PC-9 (cell line): ENCODE measurements at regions of chr3 and their contacts with region 1.

Region 1: DNA sequence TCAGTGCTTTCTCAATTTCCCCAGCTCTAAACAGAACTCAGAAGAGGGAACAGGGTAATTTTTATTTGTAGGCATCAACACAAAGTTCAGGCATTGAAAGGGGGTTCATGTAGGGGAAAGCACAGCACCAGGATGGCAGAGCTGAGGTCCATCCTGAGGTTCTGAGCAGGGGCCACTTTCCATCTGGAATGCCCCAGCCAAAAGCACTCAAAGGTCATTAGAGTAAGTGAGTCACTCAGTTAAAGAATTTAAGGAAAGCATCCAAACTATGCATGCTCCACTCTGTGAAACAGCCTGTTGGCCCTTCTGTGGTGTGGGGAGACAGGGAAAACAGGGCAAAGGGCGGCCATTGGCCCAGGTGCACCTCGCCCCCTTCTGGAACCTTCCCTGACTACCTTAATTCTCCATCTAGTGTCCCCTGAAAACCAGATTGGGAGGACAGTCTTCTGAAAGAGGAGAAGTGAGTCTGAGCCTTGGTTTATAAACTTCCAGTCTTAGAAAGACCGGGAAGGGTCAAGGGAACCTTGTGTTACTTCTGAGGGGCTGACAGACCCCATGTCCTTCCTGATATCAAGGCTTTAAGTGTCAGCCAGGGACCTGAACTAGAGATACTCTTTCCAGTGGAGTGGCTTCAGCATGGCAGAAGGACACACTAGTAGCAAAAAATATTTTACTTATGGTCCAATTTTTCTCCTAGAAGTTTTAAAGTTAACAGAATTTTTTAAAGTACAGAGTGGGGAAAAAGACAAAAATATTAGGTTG is 133.3 kb downstream of the MYLK start:
- DNase-seq: peak; percentile 66 to 87
- H3K4me3 ChIP-seq: no peak overlapping the region
- H3K27ac ChIP-seq: peak overlapping the region; percentile 81
- H3K4me1 ChIP-seq: peaks cover 30% of the 10 kb centered on the region
- H3K27me3 ChIP-seq: no peaks in the 10 kb centered on the region
- CTCF ChIP-seq: no peak; the same call in 1 of the 2 replicates

Region 2: GRCh38 chr3:123818921-123819429 is 68.1 kb after region 1 on chr3:
- CTCF ChIA-PET with region 1: no interaction called
- POLR2A ChIA-PET with region 1: no interaction called
- intact Hi-C with region 1: loop called (anchors 2 kb)
- DNase-seq: peak; percentile 47 to 88
- H3K4me3 ChIP-seq: no peak overlapping the region
- H3K27ac ChIP-seq: no peak overlapping the region
- H3K4me1 ChIP-seq: peaks cover 23% of the 10 kb centered on the region
- H3K27me3 ChIP-seq: no peaks in the 10 kb centered on the region
- CTCF ChIP-seq: no peak

Region 3: GRCh38 chr3:124260206-124260915 is 509.5 kb after region 1 on chr3:
- CTCF ChIA-PET with region 1: no interaction called
- POLR2A ChIA-PET with region 1: no interaction called
- intact Hi-C with region 1: loop called (anchors 5 kb)
- DNase-seq: peak in 1 of 2 experiments; percentile 37
- H3K4me3 ChIP-seq: no peak overlapping the region
- H3K27ac ChIP-seq: no peak overlapping the region
- H3K4me1 ChIP-seq: no peaks in the 10 kb centered on the region; the same call in 1 of the 2 replicates
- H3K27me3 ChIP-seq: 0 out of 2 replicates have a peak, but pooled peaks cover 3% of the 10 kb centered on the region
- CTCF ChIP-seq: no peak